HEK293 (cell line): ENCODE measurements at regions of chr1 and their contacts with region 1.

Region 1: GRCh38 chr1:156728597-156729462 is at the start of gene ISG20L2:
- H3K4me3 ChIP-seq: peak within 1 kb of the TSS; percentile 85
- H3K27ac ChIP-seq: peak within 1 kb of the TSS; percentile 72
- H3K4me1 ChIP-seq: peaks cover 7% of the 10 kb centered on the region
- CTCF ChIP-seq: peak; percentile 63; the same call in 1 of the 2 replicates

Region 2: GRCh38 chr1:156625436-156626078 is 103.3 kb before region 1 on chr1:
- CTCF ChIA-PET with region 1: interaction called, 40 read pairs
- POLR2A ChIA-PET with region 1: interaction called, 5 read pairs
- H3K4me3 ChIP-seq: peak overlapping the region; percentile 26
- H3K27ac ChIP-seq: no peak overlapping the region; the same call in 1 of the 2 replicates
- H3K4me1 ChIP-seq: no peaks in the 10 kb centered on the region
- CTCF ChIP-seq: peak; percentile 88

Region 3: GRCh38 chr1:156705918-156706656 is 22.7 kb before region 1 on chr1:
- CTCF ChIA-PET with region 1: interaction called, 65 read pairs
- POLR2A ChIA-PET with region 1: interaction called, 10 read pairs
- H3K4me3 ChIP-seq: peak overlapping the region; percentile 36
- H3K27ac ChIP-seq: peak overlapping the region; percentile 39; the same call in 1 of the 2 replicates
- H3K4me1 ChIP-seq: peaks cover 12% of the 10 kb centered on the region
- CTCF ChIP-seq: peak; percentile 92

Region 4: DNA sequence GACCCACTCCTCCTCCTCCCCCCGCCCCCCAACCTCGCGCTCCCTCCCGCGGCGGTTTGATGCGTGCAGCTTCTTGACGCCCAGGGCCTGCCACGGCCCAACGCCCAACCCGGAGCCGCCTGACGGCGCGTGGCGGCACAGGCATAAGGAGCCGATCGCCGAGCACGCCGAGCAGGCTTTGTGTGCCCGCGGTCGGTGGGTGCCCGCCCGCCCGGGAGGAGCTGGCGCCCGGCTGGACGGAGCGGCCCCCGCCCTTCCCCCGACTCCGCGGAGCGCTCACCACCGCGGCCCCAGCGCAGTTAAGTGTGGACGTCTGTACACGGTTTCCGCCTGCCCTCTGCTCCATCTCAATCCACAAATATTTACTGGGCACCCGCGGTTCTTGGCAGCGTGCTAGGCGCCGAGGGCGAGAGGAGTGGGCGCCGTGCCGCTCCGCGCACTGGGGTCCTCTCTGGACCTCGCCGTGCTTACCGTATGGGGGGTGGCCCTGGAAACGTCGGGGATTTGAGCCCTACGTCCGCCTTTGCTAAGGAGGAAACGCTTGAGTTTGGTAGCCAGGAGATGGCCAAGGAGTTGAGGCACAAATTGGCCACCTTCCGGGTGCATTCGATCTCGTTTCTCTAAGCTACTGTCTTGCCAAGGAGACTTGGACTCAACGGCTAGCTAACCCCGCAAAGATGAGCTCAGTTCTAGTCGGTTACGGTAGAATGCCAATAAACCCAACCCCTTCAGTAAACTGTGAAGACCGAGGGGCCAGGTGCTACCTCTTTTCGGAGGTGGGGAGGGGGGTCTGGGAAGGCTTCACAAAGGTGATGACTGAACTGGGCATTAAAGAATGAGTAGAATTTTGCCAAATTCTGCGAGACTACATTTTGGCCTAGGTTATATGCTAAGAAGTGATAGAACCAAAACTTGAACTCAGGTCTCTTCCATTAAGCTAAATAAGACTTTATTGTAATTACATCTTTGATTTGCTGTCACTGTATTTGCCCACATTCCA is 23.2 kb after region 1 on chr1:
- CTCF ChIA-PET with region 1: interaction called, 19 read pairs
- POLR2A ChIA-PET with region 1: interaction called, 24 read pairs
- H3K4me3 ChIP-seq: peak overlapping the region; percentile 87
- H3K27ac ChIP-seq: peak overlapping the region; percentile 71
- H3K4me1 ChIP-seq: 0 out of 2 replicates have a peak, but pooled peaks cover 11% of the 10 kb centered on the region
- CTCF ChIP-seq: peak; percentile 17; the same call in 1 of the 2 replicates

Region 5: GRCh38 chr1:156789621-156790318 is 60.9 kb after region 1 on chr1:
- CTCF ChIA-PET with region 1: interaction called, 22 read pairs
- POLR2A ChIA-PET with region 1: interaction called, 3 read pairs
- H3K4me3 ChIP-seq: no peak overlapping the region
- H3K27ac ChIP-seq: no peak overlapping the region
- H3K4me1 ChIP-seq: no peaks in the 10 kb centered on the region
- CTCF ChIP-seq: no peak

Region 6: DNA sequence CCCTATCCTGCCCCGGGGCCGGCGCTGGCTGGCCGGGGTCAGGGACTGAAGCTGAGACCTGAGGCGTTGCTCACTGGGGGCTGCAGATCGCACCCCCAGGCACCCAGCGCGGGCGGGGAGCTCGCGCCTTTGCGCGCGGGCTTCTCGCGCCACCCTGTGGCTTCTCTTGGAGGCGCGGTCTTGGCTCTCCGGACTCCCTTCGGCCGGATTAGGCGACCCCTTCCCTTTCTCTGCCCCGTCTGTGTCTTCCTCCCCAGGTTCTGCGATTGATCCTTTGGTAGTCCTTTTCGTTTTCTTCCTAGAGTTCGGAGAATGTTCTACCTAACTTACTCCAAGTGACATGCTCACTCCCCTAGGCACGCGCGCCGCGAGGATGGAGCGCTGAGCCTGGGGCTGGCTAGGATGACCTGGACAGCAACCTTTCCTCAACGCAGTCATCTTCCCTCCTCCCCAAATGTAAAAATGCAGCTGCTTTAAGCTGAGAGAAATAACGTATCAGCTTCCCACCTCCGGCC is 131.3 kb after region 1 on chr1:
- CTCF ChIA-PET with region 1: interaction called, 129 read pairs
- POLR2A ChIA-PET with region 1: interaction called, 14 read pairs
- H3K4me3 ChIP-seq: peak overlapping the region; percentile 35
- H3K27ac ChIP-seq: no peak overlapping the region
- H3K4me1 ChIP-seq: peaks cover 2% of the 10 kb centered on the region; the same call in 1 of the 2 replicates
- CTCF ChIP-seq: peak; percentile 90